ENCODE measurements at regions of chr20 and their contacts with region 1.

Region 1: GRCh38 chr20:33568378-33568777 is 78.5 kb downstream of the CBFA2T2 start:
- DNase-seq: no peak
- ATAC-seq: peak; percentile 56
- H3K4me3 ChIP-seq: no peak overlapping the region
- H3K27ac ChIP-seq: no peak overlapping the region; the same call in 1 of the 2 replicates
- H3K4me1 ChIP-seq: peaks cover 7% of the 10 kb centered on the region
- H3K27me3 ChIP-seq: no peaks in the 10 kb centered on the region
- CTCF ChIP-seq: no peak
- EP300 ChIP-seq: no peak
- POLR2A ChIP-seq: no peak
- RAD21 ChIP-seq: no peak

Region 2: GRCh38 chr20:33578510-33578909 is 10.1 kb after region 1 on chr20:
- CTCF ChIA-PET with region 1: interaction called, 8 read pairs
- POLR2A ChIA-PET with region 1: no interaction called
- RAD21 ChIA-PET with region 1: no interaction called
- SMC1A ChIA-PET with region 1: interaction called, 14 read pairs
- in situ Hi-C with region 1: no loop called
- intact Hi-C with region 1: no loop called
- DNase-seq: no peak
- ATAC-seq: no peak
- H3K4me3 ChIP-seq: no peak overlapping the region
- H3K27ac ChIP-seq: no peak overlapping the region
- H3K4me1 ChIP-seq: no peaks in the 10 kb centered on the region
- H3K27me3 ChIP-seq: no peaks in the 10 kb centered on the region
- CTCF ChIP-seq: no peak
- EP300 ChIP-seq: no peak
- POLR2A ChIP-seq: no peak
- RAD21 ChIP-seq: no peak

Region 3: GRCh38 chr20:33719989-33720709 is 151.8 kb after region 1 on chr20 and contains the start of gene PXMP4:
- CTCF ChIA-PET with region 1: no interaction called
- POLR2A ChIA-PET with region 1: no interaction called
- RAD21 ChIA-PET with region 1: no interaction called
- SMC1A ChIA-PET with region 1: no interaction called
- in situ Hi-C with region 1: no loop called
- intact Hi-C with region 1: no loop called
- DNase-seq: peak; percentile 99
- ATAC-seq: peak; percentile 99
- H3K4me3 ChIP-seq: peak within 1 kb of the TSS; percentile 72
- H3K27ac ChIP-seq: peak within 1 kb of the TSS; percentile 27
- H3K4me1 ChIP-seq: peaks cover 9% of the 10 kb centered on the region
- H3K27me3 ChIP-seq: no peaks in the 10 kb centered on the region
- CTCF ChIP-seq: no peak
- EP300 ChIP-seq: no peak
- POLR2A ChIP-seq: peak; percentile 79
- RAD21 ChIP-seq: no peak
- polyA plus RNA-seq, gene PXMP4: 12.2 to 19.2 TPM